Ascending aorta (tissue), 2 donors: ENCODE measurements at regions of chr9 and their contacts with region 1.

Region 1: GRCh38 chr9:97559111-97559514 is 57.6 kb downstream of the TMOD1 start:
- DNase-seq: no peak
- H3K4me3 ChIP-seq: no peak overlapping the region
- H3K27ac ChIP-seq: peak overlapping the region; percentile 98 to 99
- H3K4me1 ChIP-seq: peaks cover 38 to 57% of the 10 kb centered on the region in 2 donors
- H3K27me3 ChIP-seq: no peaks in the 10 kb centered on the region
- CTCF ChIP-seq: no peak

Region 2: GRCh38 chr9:97501177-97501971 is 57.7 kb before region 1 on chr9 and contains the start of gene TMOD1:
- intact Hi-C with region 1: loop called (anchors 1 kb)
- DNase-seq: peak in 1 of 2 donors; percentile 86
- H3K4me3 ChIP-seq: peak within 1 kb of the TSS; percentile 84 to 99
- H3K27ac ChIP-seq: peak within 1 kb of the TSS; percentile 88 to 91
- H3K4me1 ChIP-seq: peaks cover 0 to 30% of the 10 kb centered on the region in 2 donors
- H3K27me3 ChIP-seq: no peaks in the 10 kb centered on the region
- CTCF ChIP-seq: peak in 2 of 3 experiments; percentile 28 to 35
- total RNA-seq, gene TMOD1: 17.1 TPM

Region 3: GRCh38 chr9:97518909-97519307 is 40.2 kb before region 1 on chr9:
- intact Hi-C with region 1: loop called (anchors 5 kb)
- DNase-seq: peak; percentile 33 to 93
- H3K4me3 ChIP-seq: peak overlapping the region in 1 of 2 donors; percentile 24
- H3K27ac ChIP-seq: peak overlapping the region; percentile 86 to 87
- H3K4me1 ChIP-seq: peaks cover 3 to 16% of the 10 kb centered on the region in 2 donors
- H3K27me3 ChIP-seq: no peaks in the 10 kb centered on the region
- CTCF ChIP-seq: no peak

Region 4: DNA sequence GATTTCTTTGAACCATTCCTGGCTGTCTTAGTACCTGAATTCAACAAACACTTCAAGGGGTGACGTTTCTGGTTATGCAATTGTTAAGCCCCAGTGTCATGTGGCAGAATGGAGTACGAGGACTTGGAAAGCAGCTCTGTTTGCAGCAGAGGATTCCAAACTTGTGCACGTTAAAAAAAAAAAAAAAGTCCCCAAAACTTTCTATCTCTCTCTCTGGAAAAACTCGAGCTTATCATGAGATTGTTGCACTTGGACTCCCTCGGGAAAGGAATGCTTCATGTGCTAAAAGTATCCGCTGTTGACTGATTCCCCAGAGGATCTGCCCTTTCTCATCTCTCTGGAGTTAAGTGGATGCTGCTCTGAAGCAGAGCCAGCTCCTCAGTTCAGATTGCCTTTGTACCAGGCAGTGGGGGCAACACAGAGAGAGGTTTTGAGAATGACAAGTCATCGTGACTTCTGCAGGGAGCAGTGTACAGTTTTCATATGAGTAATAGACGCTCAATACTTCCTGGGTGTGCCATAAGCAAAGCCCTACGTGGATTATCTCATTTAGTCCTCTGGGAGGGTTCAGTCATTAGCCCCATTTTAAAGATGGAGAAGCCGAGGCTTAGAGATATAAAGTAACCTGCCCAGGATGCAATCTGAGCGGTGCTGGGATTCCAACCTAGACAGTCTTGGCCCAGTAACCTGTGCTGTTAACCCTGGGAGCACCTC is 29.6 kb before region 1 on chr9:
- intact Hi-C with region 1: loop called (anchors 1 kb)
- DNase-seq: peak in 1 of 2 donors; percentile 70
- H3K4me3 ChIP-seq: no peak overlapping the region
- H3K27ac ChIP-seq: peak overlapping the region; percentile 69 to 72
- H3K4me1 ChIP-seq: peaks cover 5 to 20% of the 10 kb centered on the region in 2 donors
- H3K27me3 ChIP-seq: no peaks in the 10 kb centered on the region
- CTCF ChIP-seq: no peak

Region 5: DNA sequence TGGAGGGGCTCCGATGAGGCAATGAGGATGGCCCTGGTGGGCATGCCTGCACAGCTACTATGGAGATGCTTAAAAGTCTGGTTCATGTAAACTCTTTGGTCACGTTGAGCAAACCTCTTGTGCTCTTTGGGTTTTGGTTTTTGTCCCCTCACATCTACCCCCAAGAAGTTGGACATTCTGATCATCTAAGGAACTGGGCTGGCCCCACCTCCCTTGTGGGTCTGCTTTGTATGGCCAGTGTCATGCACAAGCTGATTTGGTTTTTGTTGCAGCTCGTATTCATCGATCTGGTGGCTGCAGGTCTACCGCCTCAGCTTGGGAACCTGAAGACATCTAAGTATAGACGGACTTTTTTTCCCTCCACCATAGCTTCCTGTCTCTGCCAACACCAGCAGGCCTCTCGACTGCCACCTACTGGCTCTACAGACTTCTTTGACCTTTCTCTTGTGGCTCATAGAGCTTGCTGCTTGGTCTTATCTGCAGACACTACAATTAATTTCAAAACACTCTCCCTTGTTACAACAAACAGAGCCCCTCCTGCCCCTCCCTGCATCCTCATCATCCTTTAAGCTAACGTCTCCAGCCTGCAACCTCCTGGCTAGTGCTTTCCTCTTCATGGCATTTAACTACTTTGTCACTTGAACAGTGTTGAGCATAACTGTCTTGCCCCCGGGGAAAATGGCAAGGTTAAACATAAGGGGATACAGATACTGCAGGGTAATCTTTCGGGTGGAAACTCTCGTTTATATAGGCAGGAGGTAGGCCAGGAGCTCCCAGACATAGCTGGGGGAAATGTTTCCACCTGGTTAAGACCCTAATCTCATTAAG is 39.6 kb after region 1 on chr9:
- intact Hi-C with region 1: loop called (anchors 5 kb)
- DNase-seq: peak in 1 of 2 donors; percentile 89
- H3K4me3 ChIP-seq: peak overlapping the region in 1 of 2 donors; percentile 4
- H3K27ac ChIP-seq: peak overlapping the region in 1 of 2 donors; percentile 29
- H3K4me1 ChIP-seq: peaks cover 6 to 19% of the 10 kb centered on the region in 2 donors
- H3K27me3 ChIP-seq: no peaks in the 10 kb centered on the region
- CTCF ChIP-seq: peak; percentile 66 to 78 (median 71)

Region 6: DNA sequence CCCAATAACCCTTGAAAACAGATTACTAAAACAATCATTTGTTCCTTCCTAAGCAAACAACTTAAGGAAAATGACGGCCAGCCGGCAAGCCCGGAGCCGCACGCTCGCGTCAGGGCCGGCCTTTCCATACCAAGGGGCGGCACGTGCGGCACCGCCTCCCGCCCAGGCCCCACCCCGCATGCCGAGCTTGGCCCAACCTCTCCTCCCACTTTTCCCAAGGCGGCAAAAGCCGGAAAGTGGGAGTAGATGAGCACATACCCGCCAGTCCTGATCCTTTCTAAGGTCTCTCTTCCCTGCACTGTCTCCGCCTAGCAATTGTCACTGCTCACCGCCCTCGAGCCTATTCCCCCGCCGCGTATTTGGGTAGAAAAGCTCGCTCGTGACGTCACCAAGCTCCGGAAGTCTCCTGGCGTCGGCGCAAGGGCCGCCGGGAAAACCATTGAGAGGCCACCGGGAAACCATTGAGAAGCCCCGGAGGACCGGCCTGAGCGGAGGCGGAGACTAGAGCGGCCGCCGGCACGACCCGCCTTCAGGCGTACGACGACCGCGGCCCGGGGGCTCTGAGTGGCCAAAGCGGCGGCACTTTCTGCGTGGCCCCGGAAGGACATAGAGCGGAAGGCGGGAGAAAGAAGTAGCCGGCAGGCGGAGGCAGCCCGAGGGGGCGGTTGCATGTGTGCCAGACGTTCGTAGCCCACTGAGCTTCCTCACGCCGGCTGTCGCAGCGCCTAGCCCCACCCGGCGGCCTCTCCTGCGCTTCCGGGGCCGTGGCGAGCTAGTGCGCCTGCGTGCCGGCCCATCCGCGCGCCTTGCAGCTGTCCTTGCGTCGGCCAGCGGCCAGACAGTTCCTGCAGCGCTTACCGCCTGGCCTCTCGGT is 74.1 kb after region 1 on chr9 and contains the starts of genes NCBP1 and TSTD2:
- intact Hi-C with region 1: loop called (anchors 2 kb)
- DNase-seq: peak; percentile 91 to 98
- H3K4me3 ChIP-seq: peak within 1 kb of the TSS; percentile 81 to 89
- H3K27ac ChIP-seq: peak within 1 kb of the TSS; percentile 97 to 98
- H3K4me1 ChIP-seq: peaks cover 10 to 25% of the 10 kb centered on the region in 2 donors
- H3K27me3 ChIP-seq: no peaks in the 10 kb centered on the region
- CTCF ChIP-seq: no peak
- total RNA-seq, gene NCBP1: 5.1 TPM
- total RNA-seq, gene TSTD2: 1.4 TPM

Region 7: DNA sequence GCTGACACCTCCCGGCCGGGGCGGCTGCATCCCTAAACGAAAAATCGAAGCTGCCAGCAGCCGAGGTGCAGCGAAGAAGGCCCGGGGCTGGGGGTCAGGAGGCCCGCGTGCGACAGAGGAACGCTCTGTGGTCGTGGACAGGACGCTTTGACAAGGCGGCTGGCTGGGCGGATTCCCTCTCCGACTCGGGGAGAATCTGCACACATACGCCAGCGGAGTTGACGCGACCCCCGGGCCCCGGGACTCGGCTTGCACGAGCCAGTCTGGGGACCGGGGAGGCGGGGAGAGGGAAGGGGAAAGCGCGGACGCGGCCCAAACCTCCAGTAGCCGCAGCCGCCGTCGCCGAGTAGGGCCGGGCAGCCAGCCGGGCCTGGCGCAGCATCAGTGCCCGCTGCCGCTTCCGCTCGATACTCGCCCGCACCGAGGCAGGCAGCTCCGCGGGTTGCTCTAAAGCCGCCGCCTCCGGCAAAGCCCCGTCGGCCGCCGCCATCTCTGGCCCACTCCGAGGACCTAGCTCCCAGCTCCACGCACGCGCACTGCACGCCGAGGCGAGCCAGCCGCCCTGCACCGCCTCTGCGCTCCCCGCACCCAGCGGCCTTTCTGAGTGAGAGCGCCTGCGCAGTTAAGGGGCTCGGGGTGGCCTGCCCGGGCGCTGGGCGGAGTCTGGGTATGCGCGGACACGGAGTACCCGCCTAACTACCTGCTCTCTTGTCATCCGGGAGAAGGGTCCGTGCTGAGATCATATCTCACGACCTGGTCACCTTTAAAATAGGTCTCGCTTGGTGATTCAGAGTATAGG is 137.9 kb after region 1 on chr9 and contains the start of gene XPA:
- intact Hi-C with region 1: no loop called
- DNase-seq: peak; percentile 80 to 98
- H3K4me3 ChIP-seq: peak within 1 kb of the TSS; percentile 73 to 81
- H3K27ac ChIP-seq: peak within 1 kb of the TSS; percentile 93 to 96
- H3K4me1 ChIP-seq: peaks cover 0 to 25% of the 10 kb centered on the region in 2 donors
- H3K27me3 ChIP-seq: no peaks in the 10 kb centered on the region
- CTCF ChIP-seq: no peak
- total RNA-seq, gene XPA: 3.2 TPM

Region 8: DNA sequence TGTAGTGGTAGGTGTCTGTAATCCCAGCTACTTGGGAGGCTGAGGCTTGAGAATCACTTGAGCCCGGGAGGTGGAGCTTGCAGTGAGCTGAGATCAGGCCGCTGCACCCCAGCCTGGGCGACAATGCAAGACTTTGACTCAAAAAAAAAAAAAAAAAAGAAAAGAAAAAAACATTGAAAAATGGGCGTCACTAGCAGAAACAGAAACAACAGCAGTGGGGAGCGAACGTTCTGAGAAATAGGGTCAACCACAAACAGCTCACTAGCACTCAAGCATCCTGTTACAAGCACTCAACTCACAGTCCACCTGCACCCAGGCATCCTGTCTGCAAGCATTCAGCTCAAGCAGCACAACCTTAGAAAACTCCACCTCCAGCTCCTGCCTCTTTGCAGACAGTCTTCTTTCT is 542.8 kb after region 1 on chr9:
- intact Hi-C with region 1: no loop called
- DNase-seq: no peak
- H3K4me3 ChIP-seq: no peak overlapping the region
- H3K27ac ChIP-seq: no peak overlapping the region
- H3K4me1 ChIP-seq: no peaks in the 10 kb centered on the region
- H3K27me3 ChIP-seq: no peaks in the 10 kb centered on the region
- CTCF ChIP-seq: no peak

Region 9: GRCh38 chr9:98150721-98151120 is 591.6 kb after region 1 on chr9:
- intact Hi-C with region 1: no loop called
- DNase-seq: peak in 1 of 2 donors; percentile 24
- H3K4me3 ChIP-seq: no peak overlapping the region
- H3K27ac ChIP-seq: no peak overlapping the region
- H3K4me1 ChIP-seq: no peaks in the 10 kb centered on the region
- H3K27me3 ChIP-seq: no peaks in the 10 kb centered on the region
- CTCF ChIP-seq: no peak